ENCODE measurements at regions of chr7 and their contacts with region 1.

Region 1: DNA sequence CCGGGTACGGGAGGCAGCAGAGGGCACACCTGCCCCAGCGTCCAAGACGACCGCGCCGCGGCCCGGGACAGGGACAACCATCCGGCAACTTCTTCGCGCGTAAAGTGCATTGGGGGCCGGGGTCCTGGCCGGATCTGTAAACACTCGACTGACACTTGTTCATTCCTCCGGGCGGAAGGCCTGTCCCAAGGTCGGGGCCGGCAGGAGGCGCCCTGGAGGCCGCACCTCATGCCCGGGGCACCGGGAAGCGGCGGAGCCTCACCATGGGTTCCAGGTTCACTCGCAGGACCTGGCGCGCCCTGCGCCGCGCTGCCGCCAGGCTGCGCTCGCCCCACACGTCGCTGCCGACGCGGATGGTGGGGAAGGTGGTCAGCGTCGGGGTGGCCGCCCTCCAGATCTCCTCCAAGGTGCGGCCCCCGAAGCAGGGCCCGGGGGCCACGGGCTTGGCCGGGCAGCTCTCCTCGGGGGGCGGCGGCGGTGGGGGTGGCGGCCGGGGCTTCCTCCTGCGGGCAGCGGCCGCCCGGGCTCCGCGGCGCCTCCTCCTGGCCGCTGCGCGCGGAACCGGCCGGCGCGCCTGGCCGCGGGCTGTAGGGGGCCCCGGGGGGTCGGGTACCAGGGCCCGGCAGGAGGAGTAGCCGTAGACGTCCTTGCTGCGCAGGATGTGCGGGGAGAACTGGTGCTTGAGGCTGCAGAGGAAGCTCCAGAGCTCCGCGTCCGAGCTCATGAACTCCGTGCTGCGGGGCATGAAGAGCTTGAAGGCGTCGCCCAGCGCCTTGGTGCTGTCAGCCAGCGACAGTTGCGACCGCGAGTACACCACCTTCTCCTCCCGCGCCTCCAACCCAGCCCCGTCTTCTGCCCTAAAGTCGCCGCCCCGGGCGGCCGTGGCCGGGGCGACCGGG is 746 bp downstream of the CCDC71L start:
- DNase-seq: peak; percentile 71 to 73
- H3K4me3 ChIP-seq: peak overlapping the region; percentile 61 to 91 (median 65)
- H3K27ac ChIP-seq: peak overlapping the region; percentile 96 to 99 (median 97)
- H3K4me1 ChIP-seq: peaks cover 21 to 26% of the 10 kb centered on the region in 2 donors
- H3K27me3 ChIP-seq: no peaks in the 10 kb centered on the region
- CTCF ChIP-seq: peak; percentile 47 to 79 (median 57)
- POLR2A ChIP-seq: peak in 1 of 2 donors; percentile 52

Region 2: GRCh38 chr7:106720641-106721040 is 60.4 kb after region 1 on chr7:
- intact Hi-C with region 1: loop called (anchors 10 kb)
- DNase-seq: no peak
- H3K4me3 ChIP-seq: no peak overlapping the region
- H3K27ac ChIP-seq: no peak overlapping the region
- H3K4me1 ChIP-seq: peaks cover 4 to 9% of the 10 kb centered on the region in 2 donors
- H3K27me3 ChIP-seq: no peaks in the 10 kb centered on the region
- CTCF ChIP-seq: no peak
- POLR2A ChIP-seq: no peak